AG04449 (cell line): ENCODE measurements at regions of chr3 and their contacts with region 1.

Region 1: DNA sequence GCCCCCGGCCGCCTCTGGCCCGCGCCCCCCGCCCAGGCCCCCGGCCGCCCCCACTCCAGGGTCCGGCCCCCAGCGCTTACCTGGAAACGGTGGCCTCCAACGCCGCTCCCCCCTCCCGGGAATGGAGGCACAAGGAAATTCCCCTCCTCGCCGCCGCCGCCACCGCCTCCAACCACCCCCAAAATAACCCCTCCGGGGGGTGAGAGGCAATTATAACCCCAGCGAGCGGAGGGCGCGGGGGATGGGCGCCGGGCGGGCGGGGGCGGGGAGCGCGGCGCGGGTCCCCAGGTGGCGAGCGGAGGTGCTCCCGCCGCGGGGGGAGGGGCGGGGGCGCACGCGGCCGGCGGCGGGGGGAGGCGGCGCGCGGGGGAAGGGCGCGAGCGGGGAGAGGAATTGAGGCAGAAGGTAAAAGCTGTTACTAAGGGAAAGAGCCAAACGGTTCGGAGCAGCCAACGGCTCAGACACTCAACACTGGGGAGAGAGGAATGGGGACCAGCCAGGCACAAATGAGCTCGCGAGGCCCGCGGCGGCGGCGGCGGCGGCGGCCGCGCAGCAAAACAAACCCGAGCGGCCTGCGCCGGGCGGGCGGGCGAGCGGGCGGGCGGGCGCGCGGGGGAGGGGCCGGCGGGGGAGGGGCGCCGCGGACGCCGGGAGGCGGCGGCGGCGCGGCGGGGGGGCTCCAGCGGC is at the start of gene TBL1XR1:
- DNase-seq: peak; percentile 57
- H3K4me3 ChIP-seq: peak within 1 kb of the TSS; percentile 90
- CTCF ChIP-seq: no peak

Region 2: GRCh38 chr3:177211503-177212277 is 14.5 kb after region 1 on chr3:
- CTCF ChIA-PET with region 1: no interaction called
- POLR2A ChIA-PET with region 1: no interaction called
- DNase-seq: no peak
- H3K4me3 ChIP-seq: no peak overlapping the region
- CTCF ChIP-seq: no peak

Region 3: GRCh38 chr3:177359593-177360357 is 162.6 kb after region 1 on chr3:
- CTCF ChIA-PET with region 1: interaction called, 5 read pairs
- POLR2A ChIA-PET with region 1: interaction called, 11 read pairs
- DNase-seq: peak; percentile 96
- H3K4me3 ChIP-seq: peak overlapping the region; percentile 40
- CTCF ChIP-seq: peak; percentile 6